B cell (primary cell): ENCODE measurements at regions of chr5 and their contacts with region 1.

Region 1: DNA sequence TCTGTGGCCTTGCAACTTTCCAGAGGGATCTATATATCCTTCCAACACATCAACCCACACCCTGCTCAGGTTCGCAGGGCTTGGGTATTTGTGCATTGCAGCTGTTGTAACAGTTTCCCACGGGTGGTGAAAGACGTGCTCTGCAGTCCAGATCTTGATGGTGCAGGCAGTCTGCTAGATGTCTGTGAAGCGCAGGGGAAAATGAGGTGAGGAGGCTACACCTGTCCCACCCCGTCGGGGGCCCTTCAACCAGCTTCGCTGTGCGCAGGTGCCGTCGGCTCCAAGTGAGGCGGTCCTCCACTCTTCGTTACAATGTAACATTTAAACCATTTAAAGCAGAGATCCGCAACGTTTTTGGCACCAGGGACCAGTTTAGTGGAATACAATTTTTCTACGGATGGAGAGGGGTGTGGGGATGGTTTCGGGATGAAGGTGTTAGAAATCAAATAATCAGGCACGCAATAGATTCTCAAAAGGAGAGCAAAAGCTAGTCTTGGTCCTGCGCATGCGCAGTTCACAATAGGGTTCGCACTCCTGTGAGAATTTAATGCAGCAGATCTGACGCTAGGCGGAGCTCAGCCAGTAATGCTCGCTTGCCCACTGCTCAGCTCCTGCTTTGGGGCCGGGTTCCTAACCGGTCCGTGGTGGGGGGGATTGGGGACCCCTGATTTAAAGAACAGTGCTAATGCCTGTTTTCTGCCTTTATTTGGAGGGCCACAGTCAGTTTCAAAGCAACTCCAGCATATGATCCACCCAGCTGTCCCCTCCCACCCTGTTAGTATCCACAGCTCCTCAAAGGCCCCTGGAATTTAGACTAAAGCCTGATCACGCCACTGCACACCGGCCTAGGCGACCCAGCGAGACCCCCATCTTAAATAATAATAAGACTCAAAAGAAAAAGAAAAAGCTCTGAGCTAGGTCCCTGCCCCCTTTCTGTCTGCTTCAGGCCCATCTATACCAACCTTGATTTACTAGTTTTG is 97.1 kb upstream of the SELENOP start:
- DNase-seq: peak; percentile 93
- ATAC-seq: peak; percentile 96
- H3K4me3 ChIP-seq: peak overlapping the region; percentile 52 to 88 (median 72)
- H3K4me3 Mint-ChIP-seq: peak overlapping the region; percentile 98
- H3K27ac ChIP-seq: peak overlapping the region in 1 of 2 donors; percentile 6
- H3K27ac Mint-ChIP-seq: peak overlapping the region; percentile 93
- H3K4me1 ChIP-seq: peaks cover 5 to 9% of the 10 kb centered on the region in 2 donors
- H3K4me1 Mint-ChIP-seq: peaks cover 10% of the 10 kb centered on the region
- H3K27me3 ChIP-seq: peaks cover 0 to 7% (median 2%) of the 10 kb centered on the region in 4 experiments
- H3K27me3 Mint-ChIP-seq: peaks cover 21% of the 10 kb centered on the region
- CTCF ChIP-seq: peak; percentile 88

Region 2: DNA sequence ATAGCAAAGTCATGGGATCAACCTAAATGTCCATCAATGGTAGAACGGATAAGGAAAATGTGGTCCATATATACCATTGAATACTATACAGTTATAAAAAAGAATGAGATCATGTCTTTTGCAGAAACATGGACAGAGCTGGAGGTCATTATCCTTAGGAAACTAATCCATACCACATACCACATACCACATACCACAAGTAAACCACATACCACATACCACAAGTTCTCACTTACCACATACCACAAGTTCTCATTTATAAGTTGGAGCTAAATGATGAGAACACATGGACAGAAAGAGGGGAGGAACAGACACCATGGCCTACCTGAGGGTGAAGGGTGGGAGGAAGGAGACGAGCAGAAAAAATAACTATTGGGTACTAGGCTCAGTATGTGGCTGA is 640.2 kb before region 1 on chr5:
- CTCF ChIA-PET with region 1: no interaction called
- POLR2A ChIA-PET with region 1: no interaction called
- intact Hi-C with region 1: no loop called
- DNase-seq: no peak
- ATAC-seq: no peak
- H3K4me3 ChIP-seq: no peak overlapping the region
- H3K4me3 Mint-ChIP-seq: no peak overlapping the region
- H3K27ac ChIP-seq: no peak overlapping the region
- H3K27ac Mint-ChIP-seq: no peak overlapping the region
- H3K4me1 ChIP-seq: no peaks in the 10 kb centered on the region
- H3K4me1 Mint-ChIP-seq: no peaks in the 10 kb centered on the region
- H3K27me3 ChIP-seq: no peaks in the 10 kb centered on the region
- H3K27me3 Mint-ChIP-seq: no peaks in the 10 kb centered on the region
- CTCF ChIP-seq: no peak

Region 3: DNA sequence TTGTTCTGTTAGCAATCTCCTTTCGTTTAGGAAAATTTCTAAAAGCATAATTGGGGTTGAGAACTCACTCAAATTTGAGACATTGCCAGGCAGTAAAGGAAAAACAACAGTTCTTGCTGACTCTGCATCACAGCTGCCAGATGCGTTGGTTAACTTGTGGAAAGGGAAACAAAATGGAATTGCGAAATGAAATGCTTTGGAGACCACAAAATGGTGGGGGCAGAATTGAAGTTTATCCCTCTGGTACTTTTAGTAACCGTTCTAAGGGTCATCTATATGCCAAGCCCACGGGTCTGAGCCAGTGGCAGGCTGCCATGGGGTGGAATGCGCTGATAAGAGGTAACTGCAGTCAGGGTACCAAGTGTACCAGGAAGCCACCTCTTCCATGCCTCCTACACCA is 68.5 kb before region 1 on chr5:
- CTCF ChIA-PET with region 1: no interaction called
- POLR2A ChIA-PET with region 1: no interaction called
- intact Hi-C with region 1: no loop called
- DNase-seq: no peak
- ATAC-seq: no peak
- H3K4me3 ChIP-seq: no peak overlapping the region
- H3K4me3 Mint-ChIP-seq: no peak overlapping the region
- H3K27ac ChIP-seq: no peak overlapping the region
- H3K27ac Mint-ChIP-seq: no peak overlapping the region
- H3K4me1 ChIP-seq: no peaks in the 10 kb centered on the region
- H3K4me1 Mint-ChIP-seq: no peaks in the 10 kb centered on the region
- H3K27me3 ChIP-seq: no peaks in the 10 kb centered on the region
- H3K27me3 Mint-ChIP-seq: peaks cover 12% of the 10 kb centered on the region
- CTCF ChIP-seq: no peak

Region 4: DNA sequence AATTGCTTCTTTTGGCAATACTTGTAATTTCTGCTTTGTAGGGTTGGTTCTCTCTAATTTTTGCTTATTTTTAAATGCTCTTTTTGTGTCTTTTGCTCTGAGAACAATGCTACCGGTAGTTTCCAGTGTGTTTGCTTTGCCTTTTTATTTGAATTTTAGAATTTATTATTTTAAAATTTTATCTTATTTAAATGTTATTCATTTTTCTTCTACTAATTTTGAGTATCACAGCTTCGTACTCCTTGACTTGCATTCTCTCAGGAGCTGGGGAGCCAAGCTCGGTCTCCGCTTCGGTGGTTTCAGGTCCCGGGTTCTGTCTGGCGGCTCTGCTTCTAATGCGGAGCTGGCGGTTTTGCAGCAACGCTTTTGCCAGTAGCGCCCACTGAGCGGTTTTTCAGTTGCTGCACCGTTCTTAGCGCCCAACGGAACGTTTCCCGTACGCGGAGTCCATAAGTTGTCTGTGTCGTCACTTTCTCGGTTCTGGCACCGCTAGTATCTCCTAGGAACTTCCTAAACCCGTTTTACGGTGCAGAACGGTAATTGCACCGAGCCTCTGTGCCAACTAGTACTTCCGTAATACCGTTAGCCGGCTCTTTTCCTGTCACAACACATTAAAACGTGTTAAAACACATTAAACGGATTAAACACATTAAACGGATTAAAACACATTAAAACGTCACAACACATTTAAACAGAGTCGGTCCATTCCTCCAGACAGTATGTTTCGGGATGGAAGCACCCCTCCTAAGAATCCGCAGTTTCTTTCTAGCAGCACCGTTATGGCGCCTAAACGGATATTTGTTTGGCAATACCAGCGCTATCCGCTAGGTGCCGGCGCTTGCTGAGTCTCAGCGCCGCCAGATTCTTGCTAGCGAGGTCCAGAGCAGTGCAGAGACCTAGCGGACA is 85.7 kb after region 1 on chr5:
- CTCF ChIA-PET with region 1: interaction called, 27 read pairs
- POLR2A ChIA-PET with region 1: interaction called, 24 read pairs
- intact Hi-C with region 1: loop called (anchors 1 kb)
- DNase-seq: peak; percentile 94
- ATAC-seq: peak; percentile 67
- H3K4me3 ChIP-seq: peak overlapping the region; percentile 78 to 97 (median 89)
- H3K4me3 Mint-ChIP-seq: peak overlapping the region; percentile 96
- H3K27ac ChIP-seq: peak overlapping the region; percentile 93 to 96
- H3K27ac Mint-ChIP-seq: peak overlapping the region; percentile 100
- H3K4me1 ChIP-seq: peaks cover 23 to 30% of the 10 kb centered on the region in 2 donors
- H3K4me1 Mint-ChIP-seq: peaks cover 32% of the 10 kb centered on the region
- H3K27me3 ChIP-seq: peaks cover 0 to 9% (median 1%) of the 10 kb centered on the region in 4 experiments
- H3K27me3 Mint-ChIP-seq: no peaks in the 10 kb centered on the region
- CTCF ChIP-seq: peak; percentile 84

Region 5: DNA sequence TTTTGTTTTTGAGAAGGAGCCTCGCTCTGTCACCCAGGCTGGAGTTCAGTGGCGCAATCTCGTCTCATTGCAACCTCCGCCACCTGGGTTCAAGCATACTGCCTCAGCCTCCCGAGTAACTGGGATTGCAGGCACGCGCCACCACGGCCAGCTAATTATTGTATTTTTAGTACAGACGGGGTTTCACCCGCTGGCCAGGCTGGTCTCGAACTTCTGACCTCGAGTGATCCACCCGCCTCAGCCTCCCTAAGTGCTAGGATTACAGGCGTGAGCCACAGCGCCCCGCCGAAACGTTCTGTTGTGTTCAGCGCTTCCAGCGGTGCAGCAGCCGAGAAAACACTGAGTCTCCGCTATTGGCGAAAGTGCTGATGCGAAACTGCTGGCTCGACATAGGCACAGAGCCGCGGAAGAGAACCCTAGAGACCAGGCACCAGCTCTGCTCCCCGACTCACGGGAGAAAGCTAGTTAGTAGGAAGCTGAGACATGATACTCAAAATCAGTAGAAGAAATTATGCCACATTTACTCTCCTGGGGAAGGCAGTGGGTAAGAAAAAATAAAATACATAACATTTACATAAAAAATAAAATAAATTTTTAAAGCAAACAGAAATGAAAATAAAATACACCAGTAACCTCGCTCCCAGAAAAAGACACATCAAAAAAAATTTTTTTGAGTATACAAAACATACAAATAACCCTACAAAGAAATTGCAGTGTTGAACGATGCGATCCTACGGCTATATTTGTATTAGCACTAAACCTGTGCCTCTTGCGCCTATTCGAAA is 99.8 kb after region 1 on chr5:
- CTCF ChIA-PET with region 1: interaction called, 20 read pairs
- POLR2A ChIA-PET with region 1: no interaction called
- intact Hi-C with region 1: no loop called
- DNase-seq: peak; percentile 95
- ATAC-seq: peak; percentile 58
- H3K4me3 ChIP-seq: peak overlapping the region; percentile 69 to 99 (median 76)
- H3K4me3 Mint-ChIP-seq: peak overlapping the region; percentile 89
- H3K27ac ChIP-seq: peak overlapping the region; percentile 83 to 97
- H3K27ac Mint-ChIP-seq: peak overlapping the region; percentile 98
- H3K4me1 ChIP-seq: peaks cover 20 to 38% of the 10 kb centered on the region in 2 donors
- H3K4me1 Mint-ChIP-seq: peaks cover 31% of the 10 kb centered on the region
- H3K27me3 ChIP-seq: no peaks in the 10 kb centered on the region
- H3K27me3 Mint-ChIP-seq: no peaks in the 10 kb centered on the region
- CTCF ChIP-seq: peak; percentile 36

Region 6: DNA sequence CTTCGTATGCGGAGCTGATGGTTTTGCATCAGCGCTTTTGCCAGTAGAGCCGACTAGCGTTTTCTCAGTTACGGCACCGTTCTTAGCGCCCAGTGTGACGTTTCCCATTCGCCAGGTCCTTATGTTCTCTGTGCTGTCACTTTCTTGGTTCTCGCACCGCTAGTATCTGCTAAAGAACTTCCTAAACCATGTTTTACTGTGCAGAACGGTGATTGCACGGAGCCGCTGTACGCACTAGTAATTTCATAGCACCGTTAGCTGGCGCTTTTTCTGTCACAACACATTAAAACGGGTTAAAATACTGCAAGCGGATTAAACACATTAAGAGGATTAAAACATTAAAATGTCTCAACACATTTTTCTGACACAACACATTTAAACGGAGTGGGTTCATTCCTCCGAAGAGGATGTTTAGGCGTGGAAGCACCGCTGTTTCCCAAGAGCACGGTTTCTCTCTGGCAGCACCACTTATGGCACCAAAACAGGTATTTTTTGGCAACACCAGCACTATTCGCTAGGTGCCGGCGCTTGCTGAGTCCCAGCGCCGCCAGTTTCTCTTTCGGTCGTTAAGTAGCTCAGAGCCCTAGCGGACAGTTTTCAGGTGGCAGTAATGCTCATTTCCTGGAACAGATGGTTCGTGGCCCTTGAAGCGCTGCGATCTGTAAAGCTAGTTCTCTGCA is 111.0 kb after region 1 on chr5:
- CTCF ChIA-PET with region 1: interaction called, 29 read pairs
- POLR2A ChIA-PET with region 1: interaction called, 11 read pairs
- intact Hi-C with region 1: no loop called
- DNase-seq: peak; percentile 94
- ATAC-seq: peak; percentile 63
- H3K4me3 ChIP-seq: peak overlapping the region; percentile 63 to 99 (median 80)
- H3K4me3 Mint-ChIP-seq: peak overlapping the region; percentile 99
- H3K27ac ChIP-seq: peak overlapping the region; percentile 96 to 98
- H3K27ac Mint-ChIP-seq: peak overlapping the region; percentile 100
- H3K4me1 ChIP-seq: peaks cover 25 to 32% of the 10 kb centered on the region in 2 donors
- H3K4me1 Mint-ChIP-seq: peaks cover 42% of the 10 kb centered on the region
- H3K27me3 ChIP-seq: no peaks in the 10 kb centered on the region
- H3K27me3 Mint-ChIP-seq: no peaks in the 10 kb centered on the region
- CTCF ChIP-seq: peak; percentile 77

Region 7: DNA sequence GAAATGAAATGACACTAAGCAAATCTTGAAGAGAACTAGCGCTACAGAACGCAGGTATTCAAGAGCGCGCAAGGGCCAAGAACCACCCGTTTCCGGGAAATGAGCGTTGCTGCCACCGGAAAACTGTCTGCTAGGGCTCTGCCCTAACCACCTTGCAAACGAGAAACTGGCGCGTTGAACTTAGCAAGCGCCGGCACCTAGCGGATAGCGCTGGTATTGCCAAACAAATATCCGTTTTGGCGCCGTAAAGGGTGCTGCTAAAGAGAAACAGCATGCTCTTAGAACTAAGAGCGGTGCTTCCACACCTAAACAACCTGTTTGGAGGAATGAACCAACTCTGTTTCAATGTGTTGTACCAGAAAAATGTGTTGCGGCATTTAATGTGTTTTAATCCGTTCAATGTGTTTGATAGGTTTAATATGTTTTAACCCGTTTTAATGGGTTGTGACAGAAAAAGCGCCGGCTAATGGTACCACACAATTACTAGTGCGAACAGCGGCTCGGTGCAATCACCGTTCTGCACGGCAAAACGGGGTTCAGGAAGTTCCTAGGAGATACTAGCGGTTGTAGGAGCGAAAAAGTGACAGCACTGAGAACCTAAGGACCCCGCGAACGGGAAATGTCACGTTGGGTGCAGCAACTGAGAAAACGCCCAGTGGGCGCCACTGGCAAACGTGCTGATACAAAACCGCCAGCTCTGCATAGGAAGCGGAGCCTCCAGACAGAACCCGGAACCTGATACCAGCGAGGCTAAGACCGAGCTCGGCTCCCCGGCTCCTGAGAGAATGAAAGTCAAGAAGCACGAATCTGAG is 131.7 kb after region 1 on chr5 and contains the start of gene ANXA2R:
- CTCF ChIA-PET with region 1: interaction called, 42 read pairs
- POLR2A ChIA-PET with region 1: interaction called, 13 read pairs
- intact Hi-C with region 1: loop called (anchors 1 kb)
- DNase-seq: peak; percentile 97
- ATAC-seq: peak; percentile 60
- H3K4me3 ChIP-seq: peak within 1 kb of the TSS; percentile 62 to 95 (median 81)
- H3K4me3 Mint-ChIP-seq: peak within 1 kb of the TSS; percentile 97
- H3K27ac ChIP-seq: peak within 1 kb of the TSS; percentile 98 to 99
- H3K27ac Mint-ChIP-seq: peak within 1 kb of the TSS; percentile 98
- H3K4me1 ChIP-seq: peaks cover 25 to 44% of the 10 kb centered on the region in 2 donors
- H3K4me1 Mint-ChIP-seq: peaks cover 39% of the 10 kb centered on the region
- H3K27me3 ChIP-seq: no peaks in the 10 kb centered on the region
- H3K27me3 Mint-ChIP-seq: no peaks in the 10 kb centered on the region
- CTCF ChIP-seq: peak; percentile 86
- total RNA-seq, gene ANXA2R: 19.3 and 20.0 TPM in 2 replicates

Region 8: GRCh38 chr5:43105369-43106289 is 196.8 kb after region 1 on chr5:
- CTCF ChIA-PET with region 1: interaction called, 93 read pairs
- POLR2A ChIA-PET with region 1: interaction called, 3 read pairs
- intact Hi-C with region 1: loop called (anchors 1 kb)
- DNase-seq: peak; percentile 94
- ATAC-seq: peak; percentile 97
- H3K4me3 ChIP-seq: peak overlapping the region; percentile 58 to 85 (median 66)
- H3K4me3 Mint-ChIP-seq: peak overlapping the region; percentile 90
- H3K27ac ChIP-seq: peak overlapping the region; percentile 49 to 71
- H3K27ac Mint-ChIP-seq: peak overlapping the region; percentile 83
- H3K4me1 ChIP-seq: peaks cover 0 to 12% of the 10 kb centered on the region in 2 donors
- H3K4me1 Mint-ChIP-seq: peaks cover 11% of the 10 kb centered on the region
- H3K27me3 ChIP-seq: no peaks in the 10 kb centered on the region
- H3K27me3 Mint-ChIP-seq: no peaks in the 10 kb centered on the region
- CTCF ChIP-seq: peak; percentile 100

Region 9: DNA sequence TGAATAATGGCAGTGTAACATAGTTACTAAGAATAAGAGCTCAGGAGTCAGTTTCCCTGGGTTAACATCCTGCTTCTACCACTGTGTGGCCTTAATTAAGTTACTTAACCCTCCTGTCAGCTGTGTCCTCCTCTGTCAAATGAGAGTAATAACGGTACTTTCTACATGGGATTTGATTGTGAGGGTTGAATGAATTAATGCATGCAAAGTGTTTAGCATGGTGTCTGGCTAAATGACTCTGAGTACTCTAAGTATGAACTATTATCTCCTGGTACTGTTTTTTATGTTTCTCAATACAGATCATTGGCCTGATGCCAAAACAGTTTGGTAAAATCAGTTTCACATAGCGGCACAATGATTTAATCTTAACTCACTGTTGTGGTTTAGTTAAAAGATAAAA is 231.5 kb after region 1 on chr5:
- CTCF ChIA-PET with region 1: no interaction called
- POLR2A ChIA-PET with region 1: no interaction called
- intact Hi-C with region 1: no loop called
- DNase-seq: no peak
- ATAC-seq: no peak
- H3K4me3 ChIP-seq: no peak overlapping the region
- H3K4me3 Mint-ChIP-seq: no peak overlapping the region
- H3K27ac ChIP-seq: no peak overlapping the region
- H3K27ac Mint-ChIP-seq: peak overlapping the region; percentile 5
- H3K4me1 ChIP-seq: no peaks in the 10 kb centered on the region
- H3K4me1 Mint-ChIP-seq: peaks cover 25% of the 10 kb centered on the region
- H3K27me3 ChIP-seq: no peaks in the 10 kb centered on the region
- H3K27me3 Mint-ChIP-seq: no peaks in the 10 kb centered on the region
- CTCF ChIP-seq: no peak

Region 10: GRCh38 chr5:43389679-43390329 is 481.0 kb after region 1 on chr5:
- CTCF ChIA-PET with region 1: interaction called, 15 read pairs
- POLR2A ChIA-PET with region 1: no interaction called
- intact Hi-C with region 1: loop called (anchors 1 kb)
- DNase-seq: peak; percentile 73
- ATAC-seq: peak; percentile 61
- H3K4me3 ChIP-seq: no peak overlapping the region
- H3K4me3 Mint-ChIP-seq: no peak overlapping the region
- H3K27ac ChIP-seq: no peak overlapping the region
- H3K27ac Mint-ChIP-seq: no peak overlapping the region
- H3K4me1 ChIP-seq: no peaks in the 10 kb centered on the region
- H3K4me1 Mint-ChIP-seq: peaks cover 17% of the 10 kb centered on the region
- H3K27me3 ChIP-seq: no peaks in the 10 kb centered on the region
- H3K27me3 Mint-ChIP-seq: no peaks in the 10 kb centered on the region
- CTCF ChIP-seq: peak; percentile 91

Region 11: DNA sequence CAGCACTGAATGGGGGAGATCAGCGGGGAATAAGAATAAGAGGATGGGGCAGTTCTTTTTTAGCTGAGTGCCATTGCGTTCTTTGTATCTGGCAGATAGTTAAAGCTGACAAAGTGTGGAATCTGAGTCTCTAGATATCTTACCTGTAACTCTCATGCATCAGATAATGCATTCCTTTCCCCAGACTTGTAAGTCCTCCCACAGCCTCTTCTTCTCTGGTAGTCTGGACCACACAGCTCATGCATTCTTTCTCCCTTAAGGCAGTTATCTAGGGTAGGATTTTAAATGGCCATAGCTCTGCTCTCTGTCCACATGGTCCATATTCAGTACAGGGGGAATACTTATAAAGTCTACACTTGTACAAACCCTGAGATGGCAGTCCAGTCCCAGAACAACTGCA is 1534.4 kb after region 1 on chr5:
- CTCF ChIA-PET with region 1: no interaction called
- POLR2A ChIA-PET with region 1: no interaction called
- intact Hi-C with region 1: no loop called
- DNase-seq: no peak
- ATAC-seq: no peak
- H3K4me3 ChIP-seq: no peak overlapping the region
- H3K4me3 Mint-ChIP-seq: no peak overlapping the region
- H3K27ac ChIP-seq: no peak overlapping the region
- H3K27ac Mint-ChIP-seq: no peak overlapping the region
- H3K4me1 ChIP-seq: no peaks in the 10 kb centered on the region
- H3K4me1 Mint-ChIP-seq: no peaks in the 10 kb centered on the region
- H3K27me3 ChIP-seq: no peaks in the 10 kb centered on the region
- H3K27me3 Mint-ChIP-seq: no peaks in the 10 kb centered on the region
- CTCF ChIP-seq: no peak